Natural killer cell (primary cell): ENCODE measurements at regions of chr5 and their contacts with region 1.

Region 1: GRCh38 chr5:188488-189481 is 2.5 kb upstream of the LRRC14B start:
- DNase-seq: peak; percentile 83 to 93
- ATAC-seq: peak; percentile 90 to 99 (median 97)
- H3K4me3 ChIP-seq: no peak overlapping the region
- H3K4me3 Mint-ChIP-seq: peak overlapping the region; percentile 40
- H3K27ac ChIP-seq: no peak overlapping the region
- H3K27ac Mint-ChIP-seq: peak overlapping the region in 1 of 2 donors; percentile 62
- H3K4me1 ChIP-seq: peaks cover 9% of the 10 kb centered on the region
- H3K4me1 Mint-ChIP-seq: peaks cover 8 to 10% of the 10 kb centered on the region in 2 donors
- H3K27me3 ChIP-seq: no peaks in the 10 kb centered on the region
- H3K27me3 Mint-ChIP-seq: peaks cover 0 to 11% of the 10 kb centered on the region in 2 donors
- CTCF ChIP-seq: peak; percentile 91

Region 2: DNA sequence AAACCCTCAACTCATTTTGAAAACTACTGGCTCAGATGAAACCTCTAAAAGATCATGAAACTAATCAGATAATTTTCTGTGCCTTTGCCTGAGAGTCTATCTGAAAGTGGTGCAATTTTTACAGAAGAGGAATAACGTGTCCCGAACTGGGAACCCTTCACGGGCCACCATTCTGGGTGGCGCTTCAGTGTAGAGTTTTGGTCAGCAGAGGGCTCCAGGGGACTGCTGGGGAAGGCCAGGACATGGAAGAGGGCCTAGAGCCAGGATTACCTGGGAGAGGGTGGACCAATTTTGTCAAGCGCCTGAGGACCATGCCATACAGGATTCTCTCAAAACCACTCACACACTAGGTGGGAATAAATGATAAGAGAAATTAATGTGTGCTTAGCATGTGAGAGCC is 146.5 kb before region 1 on chr5:
- intact Hi-C with region 1: no loop called
- DNase-seq: no peak
- ATAC-seq: no peak
- H3K4me3 ChIP-seq: no peak overlapping the region
- H3K4me3 Mint-ChIP-seq: no peak overlapping the region
- H3K27ac ChIP-seq: no peak overlapping the region
- H3K27ac Mint-ChIP-seq: no peak overlapping the region
- H3K4me1 ChIP-seq: no peaks in the 10 kb centered on the region
- H3K4me1 Mint-ChIP-seq: no peaks in the 10 kb centered on the region
- H3K27me3 ChIP-seq: peaks cover 5% of the 10 kb centered on the region
- H3K27me3 Mint-ChIP-seq: peaks cover 5 to 59% of the 10 kb centered on the region in 2 donors
- CTCF ChIP-seq: no peak

Region 3: DNA sequence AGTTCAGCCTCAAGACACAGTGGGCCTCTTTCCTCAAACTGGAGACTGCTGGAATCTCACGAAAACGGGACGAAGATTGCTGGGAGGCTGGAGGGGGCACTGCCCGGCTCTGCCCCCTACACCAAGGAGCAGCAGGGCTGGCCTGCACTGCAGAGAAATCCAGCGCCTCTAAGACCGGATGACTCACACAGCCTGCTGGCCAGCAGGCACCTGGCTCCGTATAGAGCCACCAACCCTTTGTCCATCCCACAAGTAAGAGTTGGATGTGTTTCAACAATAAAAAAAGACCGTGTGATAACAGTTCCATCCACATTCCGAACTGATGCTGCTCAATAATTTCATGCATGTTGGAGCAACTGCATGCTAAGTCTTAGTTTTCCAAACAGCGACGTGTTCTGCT is 17.6 kb after region 1 on chr5:
- intact Hi-C with region 1: no loop called
- DNase-seq: no peak
- ATAC-seq: no peak
- H3K4me3 ChIP-seq: no peak overlapping the region
- H3K4me3 Mint-ChIP-seq: no peak overlapping the region
- H3K27ac ChIP-seq: no peak overlapping the region
- H3K27ac Mint-ChIP-seq: no peak overlapping the region
- H3K4me1 ChIP-seq: no peaks in the 10 kb centered on the region
- H3K4me1 Mint-ChIP-seq: peaks cover 12 to 29% of the 10 kb centered on the region in 2 donors
- H3K27me3 ChIP-seq: no peaks in the 10 kb centered on the region
- H3K27me3 Mint-ChIP-seq: no peaks in the 10 kb centered on the region
- CTCF ChIP-seq: no peak

Region 4: GRCh38 chr5:217860-218456 is 29.2 kb after region 1 on chr5 and contains the starts of genes CCDC127 and SDHA:
- intact Hi-C with region 1: loop called (anchors 1 kb)
- DNase-seq: peak; percentile 97 to 100
- ATAC-seq: peak; percentile 77 to 90 (median 85)
- H3K4me3 ChIP-seq: peak within 1 kb of the TSS; percentile 98
- H3K4me3 Mint-ChIP-seq: peak within 1 kb of the TSS; percentile 95
- H3K27ac ChIP-seq: peak within 1 kb of the TSS; percentile 83
- H3K27ac Mint-ChIP-seq: peak within 1 kb of the TSS; percentile 95 to 96
- H3K4me1 ChIP-seq: peaks cover 13% of the 10 kb centered on the region
- H3K4me1 Mint-ChIP-seq: peaks cover 52 to 56% of the 10 kb centered on the region in 2 donors
- H3K27me3 ChIP-seq: no peaks in the 10 kb centered on the region
- H3K27me3 Mint-ChIP-seq: no peaks in the 10 kb centered on the region
- CTCF ChIP-seq: peak; percentile 26
- total RNA-seq, gene CCDC127: 4.4 to 6.2 (median 5.4) TPM
- total RNA-seq, gene SDHA: 173 to 183 (median 173) TPM

Region 5: GRCh38 chr5:431001-431710 is 242.4 kb after region 1 on chr5:
- intact Hi-C with region 1: loop called (anchors 2 kb)
- DNase-seq: peak in 1 of 2 donors; percentile 61
- ATAC-seq: peak in 1 of 3 donors; percentile 73
- H3K4me3 ChIP-seq: no peak overlapping the region
- H3K4me3 Mint-ChIP-seq: no peak overlapping the region
- H3K27ac ChIP-seq: no peak overlapping the region
- H3K27ac Mint-ChIP-seq: no peak overlapping the region
- H3K4me1 ChIP-seq: no peaks in the 10 kb centered on the region
- H3K4me1 Mint-ChIP-seq: no peaks in the 10 kb centered on the region
- H3K27me3 ChIP-seq: no peaks in the 10 kb centered on the region
- H3K27me3 Mint-ChIP-seq: peaks cover 0 to 2% of the 10 kb centered on the region in 2 donors
- CTCF ChIP-seq: no peak